ENCODE measurements at regions of chr11 and their contacts with region 1.

Region 1: DNA sequence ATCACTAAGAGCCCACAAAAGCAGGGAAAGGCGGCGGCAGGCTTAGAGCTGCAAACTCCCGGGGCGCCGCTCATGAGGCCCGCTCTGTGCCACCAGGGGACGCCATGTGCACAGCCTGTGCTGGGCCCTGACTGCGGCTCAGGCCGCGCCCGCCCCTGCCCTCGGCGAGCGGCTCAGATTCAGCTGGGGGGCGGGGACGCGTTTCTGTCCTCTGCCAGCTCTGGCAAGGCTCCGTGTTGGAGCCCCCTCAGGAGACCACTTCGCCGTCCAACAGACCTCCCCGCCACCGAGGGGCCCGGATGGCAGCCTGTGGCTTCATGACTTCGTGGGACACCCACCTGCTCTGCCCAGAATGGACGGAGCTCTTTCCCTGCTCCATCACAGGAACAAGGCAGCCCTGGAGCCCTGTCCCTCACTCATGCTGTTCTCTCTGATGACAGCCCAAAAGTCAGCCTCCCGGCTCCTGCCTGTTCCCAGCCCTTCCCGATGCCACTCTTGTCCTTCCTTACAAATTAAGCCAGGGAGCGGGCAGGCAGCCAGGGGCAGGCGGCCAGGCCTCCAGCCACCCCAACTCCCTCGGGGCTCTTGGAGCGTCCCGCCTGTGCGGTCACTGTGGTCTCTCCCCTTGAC is 69.1 kb downstream of the NAT10 start:
- DNase-seq: peak; percentile 47
- H3K4me3 ChIP-seq: peak overlapping the region; percentile 41
- H3K27ac ChIP-seq: no peak overlapping the region
- H3K27me3 ChIP-seq: no peaks in the 10 kb centered on the region
- CTCF ChIP-seq: peak; percentile 93

Region 2: DNA sequence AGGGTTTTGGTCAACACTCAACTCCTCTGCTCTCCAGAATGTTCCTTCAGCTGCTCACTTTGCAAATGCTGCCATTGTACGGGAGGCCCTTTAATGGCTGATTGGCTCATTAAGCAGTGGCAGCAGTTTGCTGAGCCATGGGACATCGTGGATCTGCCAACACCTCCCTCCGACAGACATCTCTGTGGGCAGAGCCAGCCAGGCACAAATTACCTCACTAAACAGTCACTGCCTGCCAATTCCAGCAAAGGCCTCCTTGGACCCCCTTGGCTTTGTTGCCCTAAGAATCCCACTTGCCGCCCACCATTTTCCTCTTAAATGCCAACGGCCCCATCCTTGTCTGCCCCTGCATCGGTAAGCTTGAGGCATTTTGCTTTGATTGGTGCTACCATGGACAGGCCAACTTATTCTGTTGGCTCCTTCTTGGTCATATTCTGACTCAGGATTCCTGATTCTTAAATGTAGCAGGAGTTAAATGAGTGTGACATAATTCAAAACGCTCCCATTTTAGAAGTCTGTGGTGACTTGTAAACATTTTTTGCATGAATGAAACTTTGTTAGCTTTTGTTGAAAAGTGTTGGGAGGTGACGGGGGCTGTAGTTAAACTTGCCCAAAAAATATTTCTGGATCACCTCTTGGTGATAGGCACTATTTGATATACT is 225.1 kb before region 1 on chr11:
- in situ Hi-C with region 1: no loop called
- DNase-seq: no peak
- H3K4me3 ChIP-seq: no peak overlapping the region
- H3K27ac ChIP-seq: no peak overlapping the region
- H3K27me3 ChIP-seq: no peaks in the 10 kb centered on the region
- CTCF ChIP-seq: no peak

Region 3: DNA sequence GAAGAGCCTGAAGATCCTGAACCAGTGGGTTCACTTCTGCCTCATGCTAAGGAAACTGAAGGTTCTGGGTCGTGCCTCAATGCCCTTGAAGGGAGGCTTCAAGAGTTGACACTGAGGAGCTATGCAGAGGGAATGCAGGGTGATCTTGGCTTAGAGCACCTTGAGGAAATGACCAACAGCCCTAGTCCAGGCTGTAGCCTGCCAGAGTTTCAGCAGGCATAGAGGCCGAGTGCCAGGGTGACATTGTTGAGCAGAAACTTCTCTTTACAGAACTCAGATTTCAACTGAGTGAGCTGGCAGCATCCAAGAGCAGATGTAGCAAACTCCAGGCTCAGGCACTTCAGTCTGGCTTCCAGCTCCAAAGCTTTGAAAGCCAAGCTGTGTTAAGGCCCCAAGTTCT is 146.1 kb before region 1 on chr11:
- in situ Hi-C with region 1: no loop called
- DNase-seq: no peak
- H3K4me3 ChIP-seq: no peak overlapping the region
- H3K27ac ChIP-seq: no peak overlapping the region
- H3K27me3 ChIP-seq: no peaks in the 10 kb centered on the region
- CTCF ChIP-seq: no peak

Region 4: GRCh38 chr11:34344768-34345539 is 170.4 kb after region 1 on chr11:
- in situ Hi-C with region 1: loop called (anchors 10 kb)
- DNase-seq: peak; percentile 77
- H3K4me3 ChIP-seq: no peak overlapping the region
- H3K27ac ChIP-seq: peak overlapping the region; percentile 50
- H3K27me3 ChIP-seq: no peaks in the 10 kb centered on the region
- CTCF ChIP-seq: no peak

Region 5: GRCh38 chr11:34492806-34493414 is 318.4 kb after region 1 on chr11:
- in situ Hi-C with region 1: loop called (anchors 25 kb)
- DNase-seq: peak; percentile 59
- H3K4me3 ChIP-seq: no peak overlapping the region
- H3K27ac ChIP-seq: no peak overlapping the region
- H3K27me3 ChIP-seq: peaks cover 3% of the 10 kb centered on the region
- CTCF ChIP-seq: peak; percentile 74

Measured in brain microvascular endothelial cell (primary cell).